Mucosa of descending colon (tissue), 3 donors: ENCODE measurements at regions of chr12 and their contacts with region 1.

Region 1: GRCh38 chr12:43370260-43370659 is 181.7 kb downstream of the ADAMTS20 start:
- DNase-seq: no peak
- ATAC-seq: no peak
- H3K4me3 ChIP-seq: no peak overlapping the region
- H3K4me1 ChIP-seq: no peaks in the 10 kb centered on the region
- CTCF ChIP-seq: no peak

Region 2: GRCh38 chr12:43180242-43180641 is 190.0 kb before region 1 on chr12:
- intact Hi-C with region 1: loop called in 1 of 2 experiments (anchors 5 kb)
- DNase-seq: no peak
- ATAC-seq: no peak
- H3K4me3 ChIP-seq: no peak overlapping the region
- H3K4me1 ChIP-seq: no peaks in the 10 kb centered on the region
- CTCF ChIP-seq: no peak